K562 (cell line): ENCODE measurements at regions of chr9 and their contacts with region 1.

Region 1: GRCh38 chr9:128712451-128713410 is 10.4 kb downstream of the PKN3 start:
- DNase-seq: no peak
- ATAC-seq: no peak; the same call in 2 of the 3 replicates
- H3K4me3 ChIP-seq: no peak overlapping the region
- H3K27ac ChIP-seq: no peak overlapping the region
- H3K4me1 ChIP-seq: no peaks in the 10 kb centered on the region; a peak in 1 of 5 replicates
- H3K27me3 ChIP-seq: no peaks in the 10 kb centered on the region
- CTCF ChIP-seq: no peak
- EP300 ChIP-seq: no peak
- POLR2A ChIP-seq: no peak
- RAD21 ChIP-seq: no peak

Region 2: GRCh38 chr9:128420060-128420650 is 292.6 kb before region 1 on chr9:
- CTCF ChIA-PET with region 1: no interaction called
- POLR2A ChIA-PET with region 1: no interaction called
- in situ Hi-C with region 1: loop called (anchors 10 kb)
- intact Hi-C with region 1: no loop called
- DNase-seq: peak; percentile 88 to 94 (median 90)
- ATAC-seq: peak; percentile 93
- H3K4me3 ChIP-seq: peak overlapping the region; percentile 94
- H3K27ac ChIP-seq: peak overlapping the region; percentile 61; the same call in 2 of the 3 replicates
- H3K4me1 ChIP-seq: peaks cover 23 to 56% of the 10 kb centered on the region in 2 experiments; a peak in 4 of 5 replicates
- H3K27me3 ChIP-seq: no peaks in the 10 kb centered on the region
- CTCF ChIP-seq: peak; percentile 75 to 85 (median 84)
- EP300 ChIP-seq: no peak
- POLR2A ChIP-seq: peak; percentile 64
- RAD21 ChIP-seq: peak; percentile 45 to 55

Region 3: DNA sequence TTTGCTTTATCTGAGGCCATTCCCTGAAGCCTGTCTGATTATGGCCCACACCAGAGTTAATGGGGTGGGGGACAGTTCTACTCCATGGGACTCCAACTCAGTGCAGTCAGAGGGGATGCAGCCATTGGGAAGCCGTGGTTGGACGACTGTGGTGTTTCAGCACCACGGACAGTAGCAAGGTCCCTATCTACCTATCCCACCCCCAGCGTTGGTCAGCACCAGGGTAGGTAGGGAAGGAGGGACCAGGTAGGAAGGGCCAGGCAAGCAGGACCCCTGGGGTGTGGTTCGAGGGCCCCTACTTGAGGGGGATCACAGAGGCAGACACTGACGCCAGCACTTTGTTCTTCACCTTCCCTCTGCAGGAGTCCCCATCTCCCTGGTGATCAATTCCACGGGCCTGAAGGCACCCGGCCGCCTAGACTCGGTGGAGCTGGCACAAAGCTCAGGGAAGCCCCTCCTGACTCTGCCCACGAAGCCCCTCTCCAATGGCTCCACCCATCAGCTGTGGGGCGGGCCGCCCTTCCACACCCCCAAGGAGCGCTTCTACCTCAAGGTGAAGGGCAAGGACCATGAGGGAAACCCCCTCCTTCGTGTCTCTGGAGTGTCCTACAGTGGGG is 1586.0 kb after region 1 on chr9:
- CTCF ChIA-PET with region 1: no interaction called
- POLR2A ChIA-PET with region 1: no interaction called
- in situ Hi-C with region 1: no loop called
- intact Hi-C with region 1: no loop called
- DNase-seq: peak; percentile 44 to 79 (median 60)
- ATAC-seq: peak; percentile 82
- H3K4me3 ChIP-seq: no peak overlapping the region
- H3K27ac ChIP-seq: no peak overlapping the region
- H3K4me1 ChIP-seq: no peaks in the 10 kb centered on the region; a peak in 1 of 5 replicates
- H3K27me3 ChIP-seq: peaks cover 6 to 57% of the 10 kb centered on the region in 2 experiments; a peak in 4 of 5 replicates
- CTCF ChIP-seq: no peak
- EP300 ChIP-seq: no peak
- POLR2A ChIP-seq: no peak
- RAD21 ChIP-seq: no peak